ENCODE measurements at regions of chr3 and their contacts with region 1.

Region 1: GRCh38 chr3:40985194-40985593 is 214.1 kb upstream of the CTNNB1 start:
- DNase-seq: no peak
- H3K4me3 ChIP-seq: no peak overlapping the region
- H3K4me3 Mint-ChIP-seq: no peak overlapping the region
- H3K27ac ChIP-seq: no peak overlapping the region
- H3K27ac Mint-ChIP-seq: no peak overlapping the region
- H3K4me1 ChIP-seq: no peaks in the 10 kb centered on the region
- H3K4me1 Mint-ChIP-seq: peaks cover 0 to 6% (median 0%) of the 10 kb centered on the region in 3 donors
- H3K27me3 ChIP-seq: no peaks in the 10 kb centered on the region
- H3K27me3 Mint-ChIP-seq: peaks cover 12 to 41% of the 10 kb centered on the region in 2 donors

Region 2: DNA sequence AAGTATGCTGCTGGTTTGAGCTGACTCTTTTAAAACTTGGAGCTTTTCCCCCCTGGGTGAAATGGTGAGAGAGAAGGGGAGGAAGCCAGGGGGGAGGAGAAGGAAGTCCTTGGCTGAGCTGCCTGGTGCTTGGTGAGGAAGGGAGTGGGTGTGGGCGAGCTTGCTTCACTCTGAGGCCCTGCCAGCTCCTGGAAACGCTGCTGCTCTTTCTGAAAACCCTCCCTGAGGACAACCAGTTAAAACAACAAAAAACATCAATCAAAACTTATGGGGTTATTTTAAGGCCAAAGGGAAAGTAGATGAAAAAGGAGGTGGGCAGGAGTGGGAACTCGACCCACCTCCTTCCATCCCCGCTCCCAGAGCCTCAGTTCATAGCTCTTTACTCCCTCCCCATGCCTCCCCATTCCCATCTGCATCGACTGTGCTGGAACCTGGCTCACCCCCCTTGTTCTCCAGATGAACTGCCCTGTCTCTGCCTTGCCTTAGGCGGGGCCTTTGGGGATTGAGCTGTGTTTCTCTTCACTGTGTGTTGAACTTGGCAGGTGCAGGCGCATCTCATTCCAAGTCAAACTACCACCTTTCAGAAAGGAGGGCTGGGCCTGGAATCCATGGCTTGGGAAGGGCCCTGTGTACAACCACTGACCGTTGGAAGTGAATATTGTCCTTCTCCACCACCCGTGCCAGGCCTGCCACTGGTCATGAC is 294.3 kb before region 1 on chr3:
- CTCF ChIA-PET with region 1: no interaction called
- POLR2A ChIA-PET with region 1: interaction called, 13 read pairs
- DNase-seq: no peak
- H3K4me3 ChIP-seq: no peak overlapping the region
- H3K4me3 Mint-ChIP-seq: no peak overlapping the region
- H3K27ac ChIP-seq: no peak overlapping the region
- H3K27ac Mint-ChIP-seq: no peak overlapping the region
- H3K4me1 ChIP-seq: no peaks in the 10 kb centered on the region
- H3K4me1 Mint-ChIP-seq: no peaks in the 10 kb centered on the region
- H3K27me3 ChIP-seq: no peaks in the 10 kb centered on the region
- H3K27me3 Mint-ChIP-seq: peaks cover 13 to 56% of the 10 kb centered on the region in 2 donors

Measured in CD8-positive, alpha-beta memory T cell (primary cell).